CD8-positive, alpha-beta memory T cell (primary cell): ENCODE measurements at regions of chr2 and their contacts with region 1.

Region 1: GRCh38 chr2:231557571-231558237 is 27.5 kb upstream of the NMUR1 start:
- DNase-seq: peak; percentile 42 to 81 (median 75)
- H3K4me3 ChIP-seq: no peak overlapping the region
- H3K4me3 Mint-ChIP-seq: peak overlapping the region in 4 of 7 donors; percentile 37 to 75 (median 50)
- H3K27ac ChIP-seq: no peak overlapping the region
- H3K27ac Mint-ChIP-seq: peak overlapping the region; percentile 16 to 80 (median 58)
- H3K4me1 ChIP-seq: peaks cover 15% of the 10 kb centered on the region
- H3K4me1 Mint-ChIP-seq: peaks cover 29 to 43% (median 36%) of the 10 kb centered on the region in 3 donors
- H3K27me3 ChIP-seq: no peaks in the 10 kb centered on the region
- H3K27me3 Mint-ChIP-seq: peaks cover 0 to 4% of the 10 kb centered on the region in 2 donors

Region 2: DNA sequence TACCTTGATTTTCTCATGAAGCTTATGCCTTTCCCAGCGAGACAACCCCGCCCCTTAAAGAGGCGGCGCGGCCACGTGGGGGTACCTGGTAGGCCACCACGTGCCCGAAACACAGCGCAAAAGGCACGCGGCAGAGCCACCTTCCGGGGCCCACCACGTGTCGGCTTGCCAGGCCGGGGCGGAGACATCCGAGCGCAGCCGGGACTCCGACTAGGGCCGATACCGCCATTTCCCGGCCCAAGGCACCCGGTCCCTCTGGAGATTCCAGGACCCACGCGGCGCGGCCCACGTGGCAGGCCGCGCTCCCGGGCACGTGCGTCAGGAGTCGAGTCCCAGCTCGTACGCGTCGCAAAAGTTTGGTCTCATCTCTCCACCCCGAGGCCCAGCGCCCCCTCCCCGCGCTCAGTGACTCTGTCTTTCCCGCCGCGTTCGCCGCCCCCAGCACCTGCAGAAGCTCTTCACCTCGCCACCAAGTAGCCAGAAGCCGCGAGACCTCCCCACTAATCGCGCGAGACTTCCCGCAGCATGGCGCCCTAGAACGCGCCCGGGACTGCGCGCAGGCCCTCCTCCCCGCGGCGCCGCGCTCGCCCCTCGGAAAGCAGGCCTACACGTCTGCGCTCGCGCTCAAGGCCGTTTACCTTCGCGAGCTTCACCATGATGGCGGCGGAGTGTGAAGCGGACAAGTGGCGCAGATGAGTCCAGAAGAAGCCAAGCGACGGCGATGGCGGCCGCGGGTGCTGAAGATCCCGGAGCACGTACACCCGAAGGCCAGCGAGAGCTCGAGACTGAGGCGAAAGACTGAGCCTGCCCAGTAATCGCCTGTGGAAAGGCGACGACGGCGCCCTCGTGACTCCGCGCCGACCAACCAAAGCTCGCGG is 93.8 kb before region 1 on chr2 and contains the start of gene NCL:
- CTCF ChIA-PET with region 1: interaction called, 5 read pairs
- POLR2A ChIA-PET with region 1: interaction called, 11 read pairs
- DNase-seq: peak; percentile 79 to 93 (median 88)
- H3K4me3 ChIP-seq: peak within 1 kb of the TSS; percentile 88
- H3K4me3 Mint-ChIP-seq: peak within 1 kb of the TSS; percentile 94 to 100 (median 96)
- H3K27ac ChIP-seq: peak within 1 kb of the TSS; percentile 98
- H3K27ac Mint-ChIP-seq: peak within 1 kb of the TSS; percentile 98 to 100 (median 100)
- H3K4me1 ChIP-seq: peaks cover 42% of the 10 kb centered on the region
- H3K4me1 Mint-ChIP-seq: peaks cover 47 to 55% (median 54%) of the 10 kb centered on the region in 3 donors
- H3K27me3 ChIP-seq: no peaks in the 10 kb centered on the region
- H3K27me3 Mint-ChIP-seq: peaks cover 0 to 13% of the 10 kb centered on the region in 2 donors
- total RNA-seq, gene NCL: 1,673 to 1,772 TPM

Region 3: GRCh38 chr2:231482806-231483391 is 74.8 kb before region 1 on chr2:
- CTCF ChIA-PET with region 1: interaction called, 70 read pairs
- POLR2A ChIA-PET with region 1: interaction called, 4 read pairs
- DNase-seq: peak; percentile 59 to 81 (median 64)
- H3K4me3 ChIP-seq: peak overlapping the region; percentile 64
- H3K4me3 Mint-ChIP-seq: peak overlapping the region; percentile 69 to 88 (median 78)
- H3K27ac ChIP-seq: peak overlapping the region; percentile 67
- H3K27ac Mint-ChIP-seq: peak overlapping the region; percentile 81 to 95 (median 90)
- H3K4me1 ChIP-seq: peaks cover 4% of the 10 kb centered on the region
- H3K4me1 Mint-ChIP-seq: peaks cover 4 to 18% (median 8%) of the 10 kb centered on the region in 3 donors
- H3K27me3 ChIP-seq: no peaks in the 10 kb centered on the region
- H3K27me3 Mint-ChIP-seq: peaks cover 0 to 2% of the 10 kb centered on the region in 2 donors

Region 4: GRCh38 chr2:231514103-231514950 is 43.4 kb before region 1 on chr2:
- CTCF ChIA-PET with region 1: interaction called, 17 read pairs
- POLR2A ChIA-PET with region 1: interaction called, 3 read pairs
- DNase-seq: peak; percentile 96 to 99 (median 98)
- H3K4me3 ChIP-seq: peak overlapping the region; percentile 80
- H3K4me3 Mint-ChIP-seq: peak overlapping the region; percentile 77 to 95 (median 89)
- H3K27ac ChIP-seq: peak overlapping the region; percentile 81
- H3K27ac Mint-ChIP-seq: peak overlapping the region; percentile 84 to 98 (median 96)
- H3K4me1 ChIP-seq: peaks cover 19% of the 10 kb centered on the region
- H3K4me1 Mint-ChIP-seq: peaks cover 16 to 24% (median 24%) of the 10 kb centered on the region in 3 donors
- H3K27me3 ChIP-seq: no peaks in the 10 kb centered on the region
- H3K27me3 Mint-ChIP-seq: peaks cover 0 to 3% of the 10 kb centered on the region in 2 donors

Region 5: GRCh38 chr2:231523451-231524285 is 34.0 kb before region 1 on chr2:
- CTCF ChIA-PET with region 1: interaction called, 15 read pairs
- POLR2A ChIA-PET with region 1: interaction called, 4 read pairs
- DNase-seq: peak in 4 of 5 donors; percentile 21 to 63 (median 45)
- H3K4me3 ChIP-seq: no peak overlapping the region
- H3K4me3 Mint-ChIP-seq: peak overlapping the region; percentile 0 to 85 (median 76)
- H3K27ac ChIP-seq: no peak overlapping the region
- H3K27ac Mint-ChIP-seq: peak overlapping the region; percentile 51 to 96 (median 88)
- H3K4me1 ChIP-seq: peaks cover 29% of the 10 kb centered on the region
- H3K4me1 Mint-ChIP-seq: peaks cover 58 to 82% (median 58%) of the 10 kb centered on the region in 3 donors
- H3K27me3 ChIP-seq: no peaks in the 10 kb centered on the region
- H3K27me3 Mint-ChIP-seq: no peaks in the 10 kb centered on the region

Region 6: GRCh38 chr2:231530091-231531011 is 27.4 kb before region 1 on chr2 and contains the start of gene NMUR1:
- CTCF ChIA-PET with region 1: interaction called, 20 read pairs
- POLR2A ChIA-PET with region 1: interaction called, 3 read pairs
- DNase-seq: peak; percentile 64 to 77 (median 76)
- H3K4me3 ChIP-seq: peak within 1 kb of the TSS; percentile 12
- H3K4me3 Mint-ChIP-seq: peak within 1 kb of the TSS; percentile 50 to 89 (median 70)
- H3K27ac ChIP-seq: peak within 1 kb of the TSS; percentile 16
- H3K27ac Mint-ChIP-seq: peak within 1 kb of the TSS; percentile 56 to 90 (median 73)
- H3K4me1 ChIP-seq: peaks cover 27% of the 10 kb centered on the region
- H3K4me1 Mint-ChIP-seq: peaks cover 46 to 75% (median 51%) of the 10 kb centered on the region in 3 donors
- H3K27me3 ChIP-seq: no peaks in the 10 kb centered on the region
- H3K27me3 Mint-ChIP-seq: peaks cover 0 to 3% of the 10 kb centered on the region in 2 donors
- total RNA-seq, gene NMUR1: 0.15 to 0.18 TPM

Region 7: GRCh38 chr2:231545105-231545902 is 12.4 kb before region 1 on chr2:
- CTCF ChIA-PET with region 1: interaction called, 32 read pairs
- POLR2A ChIA-PET with region 1: no interaction called
- DNase-seq: peak in 4 of 5 donors; percentile 21 to 63 (median 34)
- H3K4me3 ChIP-seq: peak overlapping the region; percentile 53
- H3K4me3 Mint-ChIP-seq: peak overlapping the region; percentile 62 to 88 (median 83)
- H3K27ac ChIP-seq: peak overlapping the region; percentile 62
- H3K27ac Mint-ChIP-seq: peak overlapping the region; percentile 84 to 99 (median 92)
- H3K4me1 ChIP-seq: peaks cover 24% of the 10 kb centered on the region
- H3K4me1 Mint-ChIP-seq: peaks cover 44 to 68% (median 57%) of the 10 kb centered on the region in 3 donors
- H3K27me3 ChIP-seq: no peaks in the 10 kb centered on the region
- H3K27me3 Mint-ChIP-seq: no peaks in the 10 kb centered on the region